ENCODE measurements at regions of chr1 and their contacts with region 1.

Region 1: GRCh38 chr1:113072757-113073478 is at the start of gene LRIG2:
- DNase-seq: peak; percentile 97
- H3K4me3 Mint-ChIP-seq: peak within 1 kb of the TSS; percentile 89
- H3K27ac Mint-ChIP-seq: peak within 1 kb of the TSS; percentile 75
- H3K4me1 Mint-ChIP-seq: peaks cover 18% of the 10 kb centered on the region
- H3K27me3 Mint-ChIP-seq: no peaks in the 10 kb centered on the region
- total RNA-seq, gene LRIG2: 12.3 and 14.5 TPM in 2 replicates

Region 2: GRCh38 chr1:112715264-112716053 is 357.5 kb before region 1 on chr1 and contains the start of gene PPM1J:
- intact Hi-C with region 1: loop called (anchors 2 kb)
- DNase-seq: peak; percentile 97
- H3K4me3 Mint-ChIP-seq: peak within 1 kb of the TSS; percentile 81
- H3K27ac Mint-ChIP-seq: peak within 1 kb of the TSS; percentile 21
- H3K4me1 Mint-ChIP-seq: peaks cover 24% of the 10 kb centered on the region
- H3K27me3 Mint-ChIP-seq: peaks cover 33% of the 10 kb centered on the region
- total RNA-seq, gene PPM1J: 0.59 and 0.67 TPM in 2 replicates

Region 3: GRCh38 chr1:112882271-112882744 is 190.6 kb before region 1 on chr1:
- intact Hi-C with region 1: loop called (anchors 2 kb)
- DNase-seq: no peak
- H3K4me3 Mint-ChIP-seq: no peak overlapping the region
- H3K27ac Mint-ChIP-seq: no peak overlapping the region
- H3K4me1 Mint-ChIP-seq: peaks cover 3% of the 10 kb centered on the region
- H3K27me3 Mint-ChIP-seq: peaks cover 14% of the 10 kb centered on the region

Region 4: GRCh38 chr1:113133038-113133437 is 60.1 kb after region 1 on chr1:
- intact Hi-C with region 1: loop called (anchors 2 kb)
- DNase-seq: no peak
- H3K4me3 Mint-ChIP-seq: no peak overlapping the region
- H3K27ac Mint-ChIP-seq: no peak overlapping the region
- H3K4me1 Mint-ChIP-seq: peaks cover 45% of the 10 kb centered on the region
- H3K27me3 Mint-ChIP-seq: no peaks in the 10 kb centered on the region

Region 5: DNA sequence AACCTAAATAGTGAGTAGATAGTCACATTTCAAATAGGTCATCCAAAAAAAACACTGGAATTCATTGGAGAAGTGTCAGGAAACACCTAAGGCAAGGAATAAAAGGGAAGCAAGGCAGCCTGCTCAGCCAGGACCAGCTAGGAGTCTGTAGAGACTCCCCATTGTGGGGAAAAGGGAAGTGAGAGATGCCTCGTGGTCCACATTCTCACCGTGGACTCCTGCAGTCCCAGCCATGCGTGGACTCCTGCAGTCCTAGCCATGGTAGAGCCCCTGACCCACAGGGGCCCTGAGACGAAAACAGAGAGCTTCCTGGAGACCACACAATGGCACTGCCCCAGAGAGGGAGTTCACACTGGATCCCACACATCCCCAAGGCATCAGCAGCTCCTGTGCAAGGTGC is 97.6 kb after region 1 on chr1:
- intact Hi-C with region 1: no loop called
- DNase-seq: no peak
- H3K4me3 Mint-ChIP-seq: no peak overlapping the region
- H3K27ac Mint-ChIP-seq: no peak overlapping the region
- H3K4me1 Mint-ChIP-seq: no peaks in the 10 kb centered on the region
- H3K27me3 Mint-ChIP-seq: peaks cover 4% of the 10 kb centered on the region

Measured in activated T-helper 2 cell treated with anti-CD3 and anti-CD28 coated beads, Interferon-gamma antibody, Interleukin-2, Interleukin-4, amounts not matched to agents 10 μg/mL and 5 μg/mL and 100 μg/mL, durations not matched to agents 14 hours and 24 hours and 36 hours (primary cell).